SK-N-SH (cell line): ENCODE measurements at regions of chr13 and their contacts with region 1.

Region 1: DNA sequence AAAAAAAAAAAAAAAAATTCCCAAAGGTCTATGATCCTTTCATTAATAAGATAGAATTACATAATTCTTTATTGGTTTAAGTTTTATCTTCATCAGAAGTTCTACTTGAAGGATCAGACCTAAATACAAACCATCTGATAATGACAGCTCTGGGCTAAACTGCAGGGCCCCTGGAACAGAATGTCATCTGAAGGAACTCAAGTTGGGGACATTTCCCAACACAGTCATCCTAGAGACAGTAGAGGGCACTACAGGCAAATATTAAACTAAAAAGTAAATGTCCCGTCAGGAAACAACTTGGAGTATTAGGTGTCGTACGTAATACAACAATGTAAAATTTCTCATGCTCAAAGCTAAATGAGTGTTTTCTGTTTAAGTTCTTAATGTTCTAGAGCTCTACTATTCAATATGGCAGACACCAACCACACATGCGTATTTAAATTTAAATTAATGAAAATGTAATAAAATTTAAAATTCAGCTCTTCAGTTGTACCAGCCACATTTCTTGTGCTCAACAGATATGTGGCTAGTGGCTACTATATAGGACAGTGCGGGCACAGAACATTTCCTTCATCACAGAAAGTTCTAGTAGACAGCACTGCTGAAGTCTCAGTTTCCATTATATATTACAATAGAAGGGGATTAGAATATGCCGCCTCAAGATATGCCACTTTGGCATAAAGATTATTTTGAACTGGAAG is 21.8 kb upstream of the NAXD start:
- DNase-seq: peak; percentile 80
- H3K4me3 ChIP-seq: no peak overlapping the region
- H3K27ac ChIP-seq: no peak overlapping the region
- H3K4me1 ChIP-seq: no peaks in the 10 kb centered on the region
- H3K27me3 ChIP-seq: no peaks in the 10 kb centered on the region
- CTCF ChIP-seq: peak; percentile 69
- EP300 ChIP-seq: no peak
- RAD21 ChIP-seq: peak; percentile 83

Region 2: GRCh38 chr13:110525328-110526319 is 68.0 kb before region 1 on chr13:
- CTCF ChIA-PET with region 1: no interaction called
- POLR2A ChIA-PET with region 1: no interaction called
- DNase-seq: no peak
- H3K4me3 ChIP-seq: no peak overlapping the region
- H3K27ac ChIP-seq: no peak overlapping the region
- H3K4me1 ChIP-seq: peaks cover 0 to 22% of the 10 kb centered on the region in 2 experiments; a peak in 1 of 4 replicates
- H3K27me3 ChIP-seq: no peaks in the 10 kb centered on the region
- CTCF ChIP-seq: no peak
- EP300 ChIP-seq: no peak
- RAD21 ChIP-seq: no peak

Region 3: GRCh38 chr13:110583178-110583865 is 10.3 kb before region 1 on chr13:
- CTCF ChIA-PET with region 1: interaction called, 12 read pairs
- POLR2A ChIA-PET with region 1: no interaction called
- DNase-seq: no peak
- H3K4me3 ChIP-seq: no peak overlapping the region
- H3K27ac ChIP-seq: no peak overlapping the region
- H3K4me1 ChIP-seq: no peaks in the 10 kb centered on the region
- H3K27me3 ChIP-seq: no peaks in the 10 kb centered on the region
- CTCF ChIP-seq: no peak
- EP300 ChIP-seq: no peak
- RAD21 ChIP-seq: no peak

Region 4: DNA sequence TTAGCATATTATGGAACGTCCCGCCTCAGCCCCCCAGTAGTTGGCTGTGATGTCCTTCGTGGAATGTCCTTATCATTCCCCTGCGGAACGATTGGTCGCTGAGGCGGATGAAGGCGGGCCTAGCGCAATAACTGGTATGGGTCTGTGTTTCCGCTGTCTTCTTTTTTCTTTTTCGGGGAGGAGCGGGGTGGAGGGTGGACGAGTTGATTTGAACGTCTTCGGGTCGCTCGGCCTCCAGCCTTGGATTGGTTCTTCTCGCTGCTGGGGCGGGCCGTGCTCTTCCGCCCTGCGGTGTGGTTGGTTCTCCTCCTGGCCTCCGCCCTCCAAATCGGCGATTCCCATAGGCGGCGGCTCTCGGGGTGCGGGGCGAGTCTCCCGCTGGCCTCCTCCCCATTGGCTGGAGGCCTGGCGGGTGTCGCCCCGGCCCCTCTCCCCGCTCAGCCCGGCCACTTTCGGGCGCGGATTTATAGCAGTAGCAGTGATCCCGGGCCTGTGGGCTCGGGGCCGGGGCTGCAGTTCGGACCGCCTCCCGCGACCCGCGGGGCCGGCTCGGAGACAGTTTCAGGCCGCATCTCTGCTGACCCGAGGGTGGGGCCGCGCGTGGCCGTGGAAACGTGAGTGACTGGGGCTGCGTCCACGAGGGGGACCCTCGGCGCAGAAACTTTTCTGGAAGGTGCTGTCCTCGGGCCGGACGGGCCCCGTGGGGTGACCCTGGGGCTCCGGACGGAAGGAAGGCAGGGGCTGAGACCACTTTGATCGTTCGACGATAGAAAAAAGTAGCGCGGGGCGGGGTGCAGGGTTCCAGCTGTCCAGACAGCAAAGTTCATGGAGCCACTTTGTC is 122.0 kb after region 1 on chr13:
- CTCF ChIA-PET with region 1: interaction called, 3 read pairs
- POLR2A ChIA-PET with region 1: interaction called, 10 read pairs
- DNase-seq: peak; percentile 96
- H3K4me3 ChIP-seq: peak overlapping the region; percentile 97 to 99
- H3K27ac ChIP-seq: peak overlapping the region; percentile 98 to 100; a peak in 3 of 4 replicates
- H3K4me1 ChIP-seq: peaks cover 3 to 6% of the 10 kb centered on the region in 2 experiments; a peak in 3 of 4 replicates
- H3K27me3 ChIP-seq: no peaks in the 10 kb centered on the region
- CTCF ChIP-seq: peak; percentile 41
- EP300 ChIP-seq: no peak
- RAD21 ChIP-seq: no peak

Region 5: GRCh38 chr13:110819203-110820014 is 225.8 kb after region 1 on chr13:
- CTCF ChIA-PET with region 1: interaction called, 16 read pairs
- POLR2A ChIA-PET with region 1: no interaction called
- DNase-seq: peak; percentile 93
- H3K4me3 ChIP-seq: peak overlapping the region in 1 of 2 experiments; percentile 9; a peak in 1 of 4 replicates
- H3K27ac ChIP-seq: no peak overlapping the region
- H3K4me1 ChIP-seq: peaks cover 0 to 3% of the 10 kb centered on the region in 2 experiments; a peak in 1 of 4 replicates
- H3K27me3 ChIP-seq: no peaks in the 10 kb centered on the region
- CTCF ChIP-seq: peak; percentile 98
- EP300 ChIP-seq: no peak
- RAD21 ChIP-seq: peak; percentile 92

Region 6: GRCh38 chr13:110845520-110845919 is 251.9 kb after region 1 on chr13:
- CTCF ChIA-PET with region 1: interaction called, 10 read pairs
- POLR2A ChIA-PET with region 1: no interaction called
- DNase-seq: no peak
- H3K4me3 ChIP-seq: no peak overlapping the region
- H3K27ac ChIP-seq: no peak overlapping the region
- H3K4me1 ChIP-seq: no peaks in the 10 kb centered on the region
- H3K27me3 ChIP-seq: no peaks in the 10 kb centered on the region; the same call in 1 of the 2 replicates
- CTCF ChIP-seq: no peak
- EP300 ChIP-seq: no peak
- RAD21 ChIP-seq: no peak